Activated naive CD4-positive, alpha-beta T cell treated with anti-CD3 and anti-CD28 coated beads, Interleukin-2, amount 10 ng/mL, durations not matched to agents 7 days and 5 days (primary cell): ENCODE measurements at regions of chr1 and their contacts with region 1.

Region 1: GRCh38 chr1:183655562-183656075 is 2.5 kb upstream of the APOBEC4 start:
- DNase-seq: peak; percentile 80
- H3K4me3 Mint-ChIP-seq: no peak overlapping the region
- H3K27ac Mint-ChIP-seq: no peak overlapping the region
- H3K4me1 Mint-ChIP-seq: peaks cover 34% of the 10 kb centered on the region
- H3K27me3 Mint-ChIP-seq: no peaks in the 10 kb centered on the region

Region 2: GRCh38 chr1:183363972-183364371 is 291.6 kb before region 1 on chr1:
- CTCF ChIA-PET with region 1: no interaction called
- DNase-seq: no peak
- H3K4me3 Mint-ChIP-seq: no peak overlapping the region
- H3K27ac Mint-ChIP-seq: no peak overlapping the region
- H3K4me1 Mint-ChIP-seq: no peaks in the 10 kb centered on the region
- H3K27me3 Mint-ChIP-seq: peaks cover 16% of the 10 kb centered on the region

Region 3: GRCh38 chr1:183635606-183636333 is 19.8 kb before region 1 on chr1 and contains the start of gene ARPC5:
- CTCF ChIA-PET with region 1: interaction called, 46 read pairs
- DNase-seq: peak; percentile 96
- H3K4me3 Mint-ChIP-seq: peak within 1 kb of the TSS; percentile 97
- H3K27ac Mint-ChIP-seq: peak within 1 kb of the TSS; percentile 98
- H3K4me1 Mint-ChIP-seq: peaks cover 32% of the 10 kb centered on the region
- H3K27me3 Mint-ChIP-seq: peaks cover 27% of the 10 kb centered on the region

Region 4: GRCh38 chr1:183670178-183670577 is 14.6 kb after region 1 on chr1:
- CTCF ChIA-PET with region 1: interaction called, 11 read pairs
- DNase-seq: no peak
- H3K4me3 Mint-ChIP-seq: no peak overlapping the region
- H3K27ac Mint-ChIP-seq: no peak overlapping the region
- H3K4me1 Mint-ChIP-seq: no peaks in the 10 kb centered on the region
- H3K27me3 Mint-ChIP-seq: peaks cover 4% of the 10 kb centered on the region

Region 5: GRCh38 chr1:183804881-183805841 is 149.5 kb after region 1 on chr1 and contains the start of gene RGL1:
- CTCF ChIA-PET with region 1: no interaction called
- DNase-seq: peak; percentile 56
- H3K4me3 Mint-ChIP-seq: peak within 1 kb of the TSS; percentile 82
- H3K27ac Mint-ChIP-seq: peak within 1 kb of the TSS; percentile 79
- H3K4me1 Mint-ChIP-seq: peaks cover 20% of the 10 kb centered on the region
- H3K27me3 Mint-ChIP-seq: peaks cover 26% of the 10 kb centered on the region

Region 6: GRCh38 chr1:183915625-183916510 is 260.2 kb after region 1 on chr1:
- CTCF ChIA-PET with region 1: interaction called, 140 read pairs
- DNase-seq: peak; percentile 78
- H3K4me3 Mint-ChIP-seq: no peak overlapping the region
- H3K27ac Mint-ChIP-seq: no peak overlapping the region
- H3K4me1 Mint-ChIP-seq: peaks cover 18% of the 10 kb centered on the region
- H3K27me3 Mint-ChIP-seq: no peaks in the 10 kb centered on the region